CD14-positive monocyte (primary cell): ENCODE measurements at regions of chr7 and their contacts with region 1.

Region 1: DNA sequence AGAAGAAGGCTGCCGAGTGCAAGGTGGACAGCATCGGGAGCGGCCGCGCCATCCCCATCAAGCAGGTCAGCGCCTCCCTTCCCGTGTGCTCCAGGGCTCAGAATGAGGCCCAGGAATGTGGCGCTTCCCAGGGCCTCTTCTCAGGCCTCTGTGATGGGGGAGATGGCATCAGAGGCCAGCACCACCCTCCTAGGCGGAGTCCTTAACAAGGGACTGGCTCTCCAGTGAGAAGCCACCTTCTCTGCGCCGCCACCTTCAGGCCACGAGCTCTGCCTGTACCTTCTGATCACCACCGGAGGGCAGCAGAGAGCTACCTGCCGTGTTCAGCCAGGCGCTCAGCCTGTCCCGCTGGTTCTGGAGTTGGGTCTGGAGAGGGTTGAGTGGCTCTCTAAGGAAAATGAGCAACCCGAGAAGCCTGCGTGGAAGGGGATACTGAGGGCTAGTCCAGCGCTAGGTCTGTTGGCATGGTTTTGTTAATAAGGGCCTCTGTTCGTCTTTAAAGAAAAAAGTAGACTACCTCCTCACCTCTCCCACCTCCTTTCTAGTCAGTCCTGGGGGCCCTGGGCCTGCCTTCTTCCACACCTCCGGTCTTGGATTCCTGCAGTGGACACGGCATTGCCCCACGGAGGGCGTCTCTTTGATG is 37.7 kb downstream of the AGAP3 start:
- DNase-seq: peak; percentile 53 to 72 (median 69)
- H3K4me3 ChIP-seq: no peak overlapping the region
- H3K4me3 Mint-ChIP-seq: no peak overlapping the region
- H3K27ac ChIP-seq: no peak overlapping the region
- H3K27ac Mint-ChIP-seq: no peak overlapping the region
- H3K4me1 ChIP-seq: no peaks in the 10 kb centered on the region
- H3K4me1 Mint-ChIP-seq: no peaks in the 10 kb centered on the region
- H3K27me3 ChIP-seq: no peaks in the 10 kb centered on the region
- H3K27me3 Mint-ChIP-seq: peaks cover 2 to 15% (median 3%) of the 10 kb centered on the region in 3 donors
- CTCF ChIP-seq: peak; percentile 93

Region 2: DNA sequence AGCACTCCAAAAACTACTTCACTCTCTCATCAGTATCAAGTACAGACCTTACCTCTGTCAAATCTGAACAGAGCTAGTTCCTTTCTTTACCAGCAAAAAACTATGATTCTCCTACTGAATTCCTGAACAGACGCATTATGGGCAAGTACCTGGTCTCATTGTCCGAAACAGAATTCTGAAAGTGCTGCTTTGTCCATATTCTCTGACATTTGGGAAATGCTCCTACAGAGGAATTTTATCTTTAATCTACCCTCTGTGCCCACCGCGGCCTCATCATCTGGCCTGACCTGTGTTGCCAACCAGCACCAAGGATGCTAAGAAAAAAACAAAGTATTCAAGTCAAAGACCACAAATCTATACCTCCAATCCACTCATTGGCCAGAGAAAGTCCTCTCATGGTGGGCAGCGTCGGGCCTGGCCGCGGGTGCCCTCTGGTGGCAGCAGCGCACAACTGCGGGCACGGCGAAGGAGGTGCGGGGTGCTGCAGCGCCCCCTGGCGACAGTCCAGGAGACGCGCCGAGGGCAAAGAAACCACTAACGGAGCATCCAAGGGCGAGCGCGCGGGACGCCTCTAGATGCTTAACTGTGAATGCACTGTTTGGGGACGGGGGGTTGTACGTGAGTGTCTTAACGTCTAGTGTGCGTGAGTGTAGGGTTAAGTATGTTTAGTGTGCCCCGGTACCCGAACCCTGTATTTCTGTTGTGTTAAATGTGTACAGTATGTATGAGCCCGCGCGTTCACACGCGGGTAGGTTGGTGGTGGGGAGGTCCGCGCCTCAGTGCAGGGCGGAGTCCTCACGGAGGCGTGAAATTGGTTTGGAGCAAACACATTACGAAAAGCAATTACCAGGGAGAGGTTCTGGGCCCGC is 48.6 kb after region 1 on chr7:
- intact Hi-C with region 1: loop called (anchors 2 to 5 kb)
- DNase-seq: peak; percentile 72 to 81 (median 76)
- H3K4me3 ChIP-seq: no peak overlapping the region
- H3K4me3 Mint-ChIP-seq: peak overlapping the region in 1 of 2 donors; percentile 67
- H3K27ac ChIP-seq: no peak overlapping the region
- H3K27ac Mint-ChIP-seq: no peak overlapping the region
- H3K4me1 ChIP-seq: peaks cover 2 to 9% of the 10 kb centered on the region in 2 donors
- H3K4me1 Mint-ChIP-seq: peaks cover 9% of the 10 kb centered on the region
- H3K27me3 ChIP-seq: peaks cover 23 to 61% of the 10 kb centered on the region in 2 donors
- H3K27me3 Mint-ChIP-seq: peaks cover 50 to 80% (median 52%) of the 10 kb centered on the region in 3 donors
- CTCF ChIP-seq: peak; percentile 100